HepG2 (cell line): ENCODE measurements at regions of chr2 and their contacts with region 1.

Region 1: GRCh38 chr2:68487773-68488355 is 20.5 kb downstream of the APLF start:
- DNase-seq: peak; percentile 20
- ATAC-seq: peak; percentile 46; the same call in 1 of the 3 replicates
- H3K4me3 ChIP-seq: no peak overlapping the region
- H3K27ac ChIP-seq: no peak overlapping the region
- H3K4me1 ChIP-seq: no peaks in the 10 kb centered on the region
- H3K27me3 ChIP-seq: no peaks in the 10 kb centered on the region
- CTCF ChIP-seq: peak; percentile 47
- EP300 ChIP-seq: no peak
- POLR2A ChIP-seq: no peak
- RAD21 ChIP-seq: no peak

Region 2: GRCh38 chr2:67938053-67938452 is 549.8 kb before region 1 on chr2:
- CTCF ChIA-PET with region 1: no interaction called
- POLR2A ChIA-PET with region 1: no interaction called
- in situ Hi-C with region 1: no loop called
- intact Hi-C with region 1: no loop called
- DNase-seq: no peak
- ATAC-seq: no peak
- H3K4me3 ChIP-seq: no peak overlapping the region
- H3K27ac ChIP-seq: no peak overlapping the region
- H3K4me1 ChIP-seq: no peaks in the 10 kb centered on the region
- H3K27me3 ChIP-seq: no peaks in the 10 kb centered on the region
- CTCF ChIP-seq: no peak
- EP300 ChIP-seq: no peak
- POLR2A ChIP-seq: no peak
- RAD21 ChIP-seq: no peak

Region 3: GRCh38 chr2:68594674-68595492 is 107.0 kb after region 1 on chr2:
- CTCF ChIA-PET with region 1: interaction called, 14 read pairs
- POLR2A ChIA-PET with region 1: no interaction called
- in situ Hi-C with region 1: loop called (anchors 5 kb)
- intact Hi-C with region 1: loop called (anchors 1 kb)
- DNase-seq: peak; percentile 70
- ATAC-seq: peak; percentile 93
- H3K4me3 ChIP-seq: peak overlapping the region in 2 of 3 experiments; percentile 5 to 37; a peak in 2 of 6 replicates
- H3K27ac ChIP-seq: no peak overlapping the region
- H3K4me1 ChIP-seq: peaks cover 13% of the 10 kb centered on the region
- H3K27me3 ChIP-seq: peaks cover 0 to 2% of the 10 kb centered on the region in 2 experiments; a peak in 1 of 5 replicates
- CTCF ChIP-seq: peak; percentile 65
- EP300 ChIP-seq: peak in 1 of 2 experiments; percentile 40; a peak in 1 of 4 replicates
- POLR2A ChIP-seq: no peak
- RAD21 ChIP-seq: no peak

Region 4: DNA sequence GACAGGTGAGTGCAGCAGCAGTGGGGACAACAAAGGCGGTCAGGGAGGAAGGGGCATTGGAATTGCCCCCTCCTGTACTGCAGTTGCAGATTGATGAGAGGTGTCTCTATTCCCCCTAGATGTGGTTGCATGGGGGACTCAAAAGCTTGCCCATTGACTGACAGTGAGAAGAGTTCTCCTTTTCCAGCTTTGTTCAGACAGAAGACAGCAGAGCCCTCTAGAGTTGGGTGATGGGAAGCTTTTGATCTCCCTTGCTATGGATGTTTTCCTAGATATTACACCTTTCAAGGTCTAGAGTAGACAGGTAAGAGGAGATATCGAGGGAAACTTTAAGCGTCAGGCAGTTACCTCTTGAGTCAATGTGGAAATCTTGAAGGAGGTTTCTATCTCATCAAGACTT is 158.4 kb after region 1 on chr2:
- CTCF ChIA-PET with region 1: no interaction called
- POLR2A ChIA-PET with region 1: no interaction called
- in situ Hi-C with region 1: no loop called
- intact Hi-C with region 1: loop called (anchors 5 kb)
- DNase-seq: peak; percentile 33
- ATAC-seq: peak; percentile 30; the same call in 2 of the 3 replicates
- H3K4me3 ChIP-seq: no peak overlapping the region
- H3K27ac ChIP-seq: no peak overlapping the region
- H3K4me1 ChIP-seq: no peaks in the 10 kb centered on the region; the same call in 1 of the 2 replicates
- H3K27me3 ChIP-seq: peaks cover 11 to 68% of the 10 kb centered on the region in 2 experiments; a peak in 4 of 5 replicates
- CTCF ChIP-seq: peak; percentile 58
- EP300 ChIP-seq: no peak
- POLR2A ChIP-seq: no peak
- RAD21 ChIP-seq: no peak

Region 5: GRCh38 chr2:68698567-68699377 is 210.9 kb after region 1 on chr2:
- CTCF ChIA-PET with region 1: no interaction called
- POLR2A ChIA-PET with region 1: no interaction called
- in situ Hi-C with region 1: no loop called
- intact Hi-C with region 1: no loop called
- DNase-seq: no peak
- ATAC-seq: no peak
- H3K4me3 ChIP-seq: no peak overlapping the region
- H3K27ac ChIP-seq: no peak overlapping the region
- H3K4me1 ChIP-seq: no peaks in the 10 kb centered on the region
- H3K27me3 ChIP-seq: no peaks in the 10 kb centered on the region; a peak in 1 of 5 replicates
- CTCF ChIP-seq: no peak
- EP300 ChIP-seq: no peak
- POLR2A ChIP-seq: no peak
- RAD21 ChIP-seq: no peak

Region 6: DNA sequence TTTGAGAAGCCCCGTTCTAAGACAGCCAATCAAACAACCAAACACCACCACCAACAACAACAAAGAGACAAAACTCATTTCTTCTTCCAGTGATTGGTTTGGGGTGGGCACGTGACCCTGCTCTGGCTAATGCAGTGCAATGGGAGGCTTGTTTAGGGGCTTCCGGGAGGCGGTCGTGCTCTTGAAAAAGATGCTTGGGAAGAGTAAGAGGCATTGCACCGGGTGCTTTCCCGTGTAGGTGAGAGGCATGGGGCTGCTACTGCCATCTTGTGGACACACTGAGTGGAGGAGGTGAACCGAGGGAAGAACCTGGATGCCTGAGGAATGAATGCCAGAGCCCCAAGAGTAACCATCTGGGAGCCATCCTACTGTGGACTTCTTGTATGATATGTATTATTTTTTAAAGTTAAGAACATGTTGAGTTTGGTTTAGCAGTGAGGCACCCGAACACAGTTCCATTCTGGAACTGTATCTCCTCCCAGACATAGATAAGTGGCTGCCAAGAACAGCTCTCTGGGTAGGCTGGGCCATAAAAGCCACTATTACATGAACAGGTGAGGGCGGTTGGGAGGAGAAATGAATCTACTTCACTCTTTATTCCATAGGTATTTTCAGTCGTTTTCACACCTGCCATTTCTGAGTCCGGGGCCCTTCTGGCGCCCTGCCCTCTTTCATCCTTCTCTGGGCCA is 227.6 kb after region 1 on chr2:
- CTCF ChIA-PET with region 1: interaction called, 15 read pairs
- POLR2A ChIA-PET with region 1: no interaction called
- in situ Hi-C with region 1: no loop called
- intact Hi-C with region 1: loop called (anchors 1 kb)
- DNase-seq: peak; percentile 71
- ATAC-seq: peak; percentile 100
- H3K4me3 ChIP-seq: no peak overlapping the region
- H3K27ac ChIP-seq: no peak overlapping the region
- H3K4me1 ChIP-seq: no peaks in the 10 kb centered on the region
- H3K27me3 ChIP-seq: no peaks in the 10 kb centered on the region
- CTCF ChIP-seq: peak; percentile 87
- EP300 ChIP-seq: no peak
- POLR2A ChIP-seq: no peak
- RAD21 ChIP-seq: peak; percentile 61